ENCODE measurements at regions of chr11 and their contacts with region 1.

Region 1: DNA sequence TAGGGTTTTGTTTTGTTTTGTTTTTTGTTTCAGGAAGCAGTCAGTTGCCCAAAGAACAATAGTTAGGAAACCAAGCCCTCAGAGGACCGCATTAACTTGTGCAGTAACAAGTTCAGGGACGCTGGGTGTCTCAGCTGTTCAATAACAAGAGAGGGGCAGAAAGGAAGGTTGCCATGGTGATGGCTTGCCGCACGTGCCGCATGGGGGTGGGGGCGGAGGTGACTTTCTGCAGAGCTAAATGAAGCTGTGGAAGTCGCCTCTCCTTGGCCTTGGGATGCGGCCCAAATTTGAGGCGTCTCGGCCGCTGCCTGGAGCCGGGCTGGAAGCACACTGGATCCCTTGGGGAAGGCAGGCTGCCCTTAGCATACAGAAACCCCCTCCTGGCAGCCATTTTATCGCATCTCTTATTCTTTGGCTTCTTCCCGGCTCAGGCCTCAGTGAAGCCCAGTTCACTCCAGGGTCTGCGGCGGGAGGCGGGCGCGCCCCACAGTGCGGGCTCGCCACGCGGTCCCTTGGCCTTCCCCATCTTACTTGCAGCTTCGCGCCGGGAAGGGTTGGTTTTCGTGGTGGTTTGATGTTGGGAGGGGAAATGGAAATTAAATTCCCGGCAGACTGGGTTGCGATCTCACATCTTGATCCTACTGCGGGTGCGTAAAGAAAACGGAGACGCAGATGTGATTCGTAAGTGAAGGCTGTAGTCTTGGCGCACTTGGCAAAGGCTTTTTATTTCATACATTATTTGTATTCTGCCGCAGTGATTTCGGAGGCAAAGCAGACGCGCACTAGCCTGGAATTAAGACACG is 94.3 kb downstream of the SLC17A6 start:
- DNase-seq: peak; percentile 48 to 64
- ATAC-seq: peak; percentile 62 to 94 (median 86)
- H3K4me3 ChIP-seq: peak overlapping the region; percentile 7 to 56 (median 46)
- H3K27ac ChIP-seq: peak overlapping the region in 7 of 10 donors; percentile 54 to 71 (median 62)
- H3K4me1 ChIP-seq: peaks cover 0 to 16% (median 4%) of the 10 kb centered on the region in 9 donors
- H3K27me3 ChIP-seq: peaks cover 0 to 26% (median 2%) of the 10 kb centered on the region in 7 donors
- CTCF ChIP-seq: no peak

Region 2: GRCh38 chr11:22625448-22626287 is 193.2 kb after region 1 on chr11 and contains the start of gene FANCF:
- intact Hi-C with region 1: loop called in 1 of 10 experiments (anchors 2 kb)
- DNase-seq: peak; percentile 87 to 98
- ATAC-seq: peak; percentile 98 to 99 (median 98)
- H3K4me3 ChIP-seq: peak within 1 kb of the TSS; percentile 37 to 98 (median 84)
- H3K27ac ChIP-seq: peak within 1 kb of the TSS; percentile 60 to 94 (median 85)
- H3K4me1 ChIP-seq: peaks cover 0 to 22% (median 18%) of the 10 kb centered on the region in 9 donors
- H3K27me3 ChIP-seq: no peaks in the 10 kb centered on the region
- CTCF ChIP-seq: no peak
- total RNA-seq, gene FANCF: 3.1 to 7.6 (median 4.8) TPM